GM12878 (cell line): ENCODE measurements at regions of chr1 and their contacts with region 1.

Region 1: DNA sequence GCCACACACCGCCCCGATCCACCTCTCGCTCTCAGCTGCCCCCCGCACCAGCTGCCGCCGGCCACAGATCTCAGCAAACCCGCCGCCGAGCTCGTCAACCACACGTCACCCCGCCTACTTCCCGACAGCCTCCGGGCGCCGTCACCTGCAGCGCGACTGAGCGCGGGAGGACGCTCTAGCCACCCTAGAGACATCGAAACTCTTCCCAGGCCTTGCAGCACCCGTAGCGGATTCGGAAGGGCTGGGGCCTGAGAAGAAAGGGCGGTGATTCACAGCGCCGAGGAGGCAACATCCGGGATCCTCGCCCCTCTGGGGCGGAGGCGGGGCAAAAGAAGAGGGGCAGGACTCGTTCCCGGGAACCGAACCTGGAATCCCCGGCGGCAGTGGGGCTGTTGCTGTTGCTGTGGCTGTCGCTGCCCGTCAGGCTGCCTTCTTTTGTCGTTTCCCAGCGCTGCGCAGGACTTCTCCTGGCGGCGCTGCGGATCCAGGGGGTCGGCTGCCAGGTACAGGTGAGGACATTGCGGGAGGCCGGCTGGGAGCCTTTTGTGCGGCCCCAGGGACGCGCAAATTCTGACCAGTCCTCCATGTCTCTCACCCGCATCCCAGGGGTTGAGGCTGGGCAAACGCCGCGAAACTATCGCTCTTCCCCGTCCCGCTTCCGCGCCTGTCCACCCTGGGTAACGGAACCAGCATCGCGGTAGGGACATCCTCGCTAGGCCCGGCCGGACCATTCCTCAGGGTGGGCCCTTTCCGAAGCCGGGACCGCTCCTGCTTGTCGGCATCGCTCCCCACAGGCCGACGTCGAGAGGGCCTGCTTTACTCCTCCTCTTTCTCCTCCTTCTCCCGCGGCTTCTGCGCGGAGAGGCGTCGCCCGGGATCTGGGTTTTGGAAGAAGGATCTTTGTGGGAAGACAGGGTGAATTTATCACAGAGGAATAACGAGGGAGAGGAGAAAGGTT is at the starts of genes RO60 and UCHL5:
- DNase-seq: peak; percentile 93
- ATAC-seq: peak; percentile 89
- H3K4me3 ChIP-seq: peak within 1 kb of the TSS; percentile 80
- H3K27ac ChIP-seq: peak within 1 kb of the TSS; percentile 95
- H3K4me1 ChIP-seq: peaks cover 28% of the 10 kb centered on the region
- H3K27me3 ChIP-seq: no peaks in the 10 kb centered on the region
- CTCF ChIP-seq: peak in 1 of 3 experiments; percentile 9; a peak in 1 of 6 replicates
- EP300 ChIP-seq: peak; percentile 38 to 60; a peak in 3 of 4 replicates
- POLR2A ChIP-seq: peak; percentile 95
- RAD21 ChIP-seq: no peak
- polyA plus RNA-seq, gene RO60: 25.4 to 103 TPM
- polyA plus RNA-seq, gene UCHL5: 36.5 to 45.6 TPM

Region 2: GRCh38 chr1:193009501-193009900 is 50.0 kb before region 1 on chr1:
- CTCF ChIA-PET with region 1: no interaction called
- POLR2A ChIA-PET with region 1: no interaction called
- RAD21 ChIA-PET with region 1: no interaction called
- SMC1A ChIA-PET with region 1: no interaction called
- in situ Hi-C with region 1: no loop called
- intact Hi-C with region 1: no loop called
- DNase-seq: no peak
- ATAC-seq: no peak
- H3K4me3 ChIP-seq: no peak overlapping the region
- H3K27ac ChIP-seq: no peak overlapping the region
- H3K4me1 ChIP-seq: no peaks in the 10 kb centered on the region
- H3K27me3 ChIP-seq: no peaks in the 10 kb centered on the region
- CTCF ChIP-seq: no peak
- EP300 ChIP-seq: no peak
- POLR2A ChIP-seq: no peak
- RAD21 ChIP-seq: no peak

Region 3: DNA sequence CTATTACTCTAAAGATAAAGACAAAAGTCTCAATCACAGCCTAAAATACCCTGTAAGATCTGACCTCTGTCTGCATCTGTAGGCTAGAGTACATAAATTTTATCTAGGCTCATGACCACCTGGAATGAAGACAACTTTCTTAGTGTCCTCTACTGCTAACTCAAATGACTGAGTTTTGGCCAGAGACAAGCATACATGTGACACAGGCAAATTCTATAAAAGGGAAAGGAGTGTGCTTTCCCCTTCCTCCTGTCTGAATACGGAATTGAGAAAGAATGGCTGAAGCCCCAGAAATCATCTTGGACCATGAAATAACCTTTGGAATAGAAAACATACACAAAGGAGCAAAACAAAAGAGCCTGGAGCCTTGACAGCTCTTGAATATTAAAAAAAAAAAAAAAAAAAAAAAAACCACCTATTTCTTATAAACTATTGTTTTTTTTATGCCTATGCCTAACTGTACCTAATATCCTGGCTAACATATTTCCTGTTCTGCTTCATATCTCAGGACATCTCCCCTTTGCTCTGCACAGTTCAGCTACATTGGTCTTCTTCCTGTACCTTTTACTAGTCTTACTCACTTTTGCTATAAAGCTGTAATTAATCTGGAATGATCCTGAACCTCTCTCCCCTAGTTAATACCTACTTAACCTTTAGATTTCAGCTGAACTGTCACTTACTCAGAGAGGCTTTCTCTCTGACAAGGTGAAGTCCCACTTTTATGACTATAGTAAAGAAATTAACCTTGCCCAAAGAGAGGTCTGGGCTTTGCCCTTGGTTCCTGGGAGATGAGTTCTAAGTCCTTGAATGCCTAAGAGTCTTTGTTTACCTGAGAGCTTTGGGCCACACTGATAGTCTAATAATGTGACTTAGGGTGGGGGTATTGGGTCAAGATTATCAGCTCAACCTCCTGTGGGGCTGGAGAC is 16.5 kb before region 1 on chr1:
- CTCF ChIA-PET with region 1: interaction called, 3 read pairs
- POLR2A ChIA-PET with region 1: interaction called, 3 read pairs
- RAD21 ChIA-PET with region 1: interaction called, 8 read pairs
- SMC1A ChIA-PET with region 1: interaction called, 11 read pairs
- in situ Hi-C with region 1: no loop called
- intact Hi-C with region 1: no loop called
- DNase-seq: no peak
- ATAC-seq: peak; percentile 32
- H3K4me3 ChIP-seq: no peak overlapping the region
- H3K27ac ChIP-seq: no peak overlapping the region
- H3K4me1 ChIP-seq: no peaks in the 10 kb centered on the region
- H3K27me3 ChIP-seq: no peaks in the 10 kb centered on the region
- CTCF ChIP-seq: no peak
- EP300 ChIP-seq: no peak
- POLR2A ChIP-seq: no peak
- RAD21 ChIP-seq: no peak

Region 4: DNA sequence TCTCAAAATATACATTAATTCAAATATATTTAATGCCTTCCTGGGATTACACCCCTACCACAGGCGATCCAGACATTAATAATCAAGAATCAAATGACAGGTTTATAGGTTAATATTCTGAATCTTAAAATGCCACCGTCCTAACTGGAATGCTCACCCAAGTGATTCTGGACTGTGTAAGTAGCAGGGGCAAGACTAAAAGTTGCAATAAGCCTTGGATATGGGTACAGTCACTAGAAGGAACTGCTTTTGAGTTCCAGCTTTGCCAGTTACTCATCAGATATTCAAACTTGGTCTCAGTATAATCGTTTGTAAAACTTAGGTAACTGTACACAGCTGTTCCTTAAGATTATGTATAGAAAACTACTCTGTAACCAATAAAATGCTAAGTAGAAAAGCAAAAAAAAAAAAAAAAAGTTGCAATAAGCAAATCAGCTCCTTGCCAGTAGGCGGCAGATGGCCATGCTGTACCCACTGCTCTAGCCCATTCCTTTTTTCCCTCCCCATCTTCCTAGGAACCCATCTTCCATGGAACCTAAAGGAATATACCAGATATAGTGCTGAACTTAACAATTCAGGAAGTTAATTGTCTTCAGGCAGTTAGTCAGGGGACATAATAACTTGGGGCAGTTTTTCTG is 10.3 kb after region 1 on chr1:
- CTCF ChIA-PET with region 1: interaction called, 18 read pairs
- POLR2A ChIA-PET with region 1: interaction called, 14 read pairs
- RAD21 ChIA-PET with region 1: interaction called, 17 read pairs
- SMC1A ChIA-PET with region 1: interaction called, 12 read pairs
- in situ Hi-C with region 1: no loop called
- intact Hi-C with region 1: no loop called
- DNase-seq: no peak
- ATAC-seq: peak; percentile 35
- H3K4me3 ChIP-seq: 0 out of 2 replicates have a peak overlapping the region, but pooled peaks have one; percentile 11
- H3K27ac ChIP-seq: peak overlapping the region; percentile 62
- H3K4me1 ChIP-seq: peaks cover 26% of the 10 kb centered on the region
- H3K27me3 ChIP-seq: no peaks in the 10 kb centered on the region
- CTCF ChIP-seq: peak; percentile 45 to 66 (median 55)
- EP300 ChIP-seq: no peak
- POLR2A ChIP-seq: no peak
- RAD21 ChIP-seq: 0 out of 2 replicates have a peak, but pooled peaks have one; percentile 32

Region 5: GRCh38 chr1:193083365-193084088 is 24.0 kb after region 1 on chr1:
- CTCF ChIA-PET with region 1: interaction called, 3 read pairs
- POLR2A ChIA-PET with region 1: no interaction called
- RAD21 ChIA-PET with region 1: interaction called, 6 read pairs
- SMC1A ChIA-PET with region 1: interaction called, 13 read pairs
- in situ Hi-C with region 1: no loop called
- intact Hi-C with region 1: no loop called
- DNase-seq: peak; percentile 47
- ATAC-seq: peak; percentile 92
- H3K4me3 ChIP-seq: no peak overlapping the region
- H3K27ac ChIP-seq: peak overlapping the region; percentile 56
- H3K4me1 ChIP-seq: peaks cover 11% of the 10 kb centered on the region; the same call in 1 of the 2 replicates
- H3K27me3 ChIP-seq: no peaks in the 10 kb centered on the region
- CTCF ChIP-seq: no peak
- EP300 ChIP-seq: peak; percentile 66 to 78; a peak in 3 of 4 replicates
- POLR2A ChIP-seq: no peak
- RAD21 ChIP-seq: no peak

Region 6: DNA sequence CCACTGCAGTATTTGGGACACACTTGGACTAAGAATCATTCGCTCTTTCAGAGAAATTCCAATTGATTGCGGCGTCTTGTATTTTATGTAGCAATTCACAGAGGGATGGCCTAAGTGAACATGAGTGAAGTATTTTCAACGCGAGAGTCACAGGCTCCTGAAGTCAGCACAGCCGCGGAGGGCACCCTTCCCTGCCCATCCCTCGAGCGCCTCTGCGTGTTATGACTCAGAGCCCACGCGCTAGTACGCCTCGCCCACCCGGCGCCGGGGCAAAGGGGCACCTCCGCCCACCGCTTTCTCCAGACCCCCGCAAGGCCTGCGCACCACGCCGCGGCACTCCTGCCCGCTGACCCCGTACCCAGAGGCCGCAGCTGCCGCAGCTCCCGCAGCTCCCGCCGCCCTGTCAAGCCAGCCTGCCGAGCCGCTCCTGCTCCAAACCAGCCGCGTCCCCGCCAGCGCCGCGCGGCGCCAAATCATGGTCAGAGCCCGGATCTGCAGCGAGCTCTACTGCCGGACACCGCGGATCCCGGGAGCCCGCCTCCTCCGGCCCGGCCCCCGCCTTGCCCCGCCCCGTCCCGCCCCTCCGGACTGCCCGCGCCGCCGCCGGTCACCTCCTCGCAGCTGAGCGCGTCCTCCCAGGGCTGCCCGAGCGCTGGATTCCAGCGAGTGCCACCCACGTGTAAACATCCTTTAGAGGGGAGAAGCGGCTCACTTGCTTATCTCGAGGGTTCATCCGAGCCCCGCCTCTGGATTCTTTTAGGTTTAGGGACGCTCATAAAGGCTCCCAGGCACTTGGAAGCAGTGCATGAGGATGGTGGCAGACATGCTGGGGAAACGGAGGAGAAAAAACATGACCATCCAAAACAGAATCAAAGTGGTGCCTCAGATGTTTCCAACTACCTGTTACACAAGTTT is 45.6 kb after region 1 on chr1 and contains the start of gene GLRX2:
- CTCF ChIA-PET with region 1: interaction called, 9 read pairs
- POLR2A ChIA-PET with region 1: interaction called, 6 read pairs
- RAD21 ChIA-PET with region 1: interaction called, 8 read pairs
- SMC1A ChIA-PET with region 1: interaction called, 5 read pairs
- in situ Hi-C with region 1: no loop called
- intact Hi-C with region 1: loop called (anchors 5 kb)
- DNase-seq: no peak
- ATAC-seq: peak; percentile 95
- H3K4me3 ChIP-seq: peak within 1 kb of the TSS; percentile 87
- H3K27ac ChIP-seq: peak within 1 kb of the TSS; percentile 58
- H3K4me1 ChIP-seq: no peaks in the 10 kb centered on the region
- H3K27me3 ChIP-seq: no peaks in the 10 kb centered on the region
- CTCF ChIP-seq: peak in 1 of 3 experiments; percentile 10; a peak in 1 of 6 replicates
- EP300 ChIP-seq: no peak
- POLR2A ChIP-seq: peak; percentile 86
- RAD21 ChIP-seq: peak; percentile 32; the same call in 1 of the 2 replicates
- polyA plus RNA-seq, gene GLRX2: 5.5 to 7.8 TPM